ENCODE measurements at regions of chr21 and their contacts with region 1.

Region 1: GRCh38 chr21:32612075-32612998 is at the start of gene CFAP298:
- DNase-seq: peak; percentile 85
- ATAC-seq: peak; percentile 90
- H3K4me3 Mint-ChIP-seq: peak within 1 kb of the TSS; percentile 99
- H3K27ac Mint-ChIP-seq: peak within 1 kb of the TSS; percentile 90
- H3K4me1 Mint-ChIP-seq: peaks cover 10% of the 10 kb centered on the region
- H3K27me3 Mint-ChIP-seq: peaks cover 6% of the 10 kb centered on the region
- total RNA-seq, gene CFAP298: 33.8 to 36.2 TPM

Region 2: GRCh38 chr21:32392880-32393676 is 219.3 kb before region 1 on chr21 and contains the start of gene URB1:
- POLR2A ChIA-PET with region 1: interaction called, 10 read pairs
- DNase-seq: peak; percentile 99
- ATAC-seq: peak; percentile 91
- H3K4me3 Mint-ChIP-seq: peak within 1 kb of the TSS; percentile 89
- H3K27ac Mint-ChIP-seq: peak within 1 kb of the TSS; percentile 83
- H3K4me1 Mint-ChIP-seq: peaks cover 35% of the 10 kb centered on the region
- H3K27me3 Mint-ChIP-seq: peaks cover 3% of the 10 kb centered on the region
- total RNA-seq, gene URB1: 15.8 to 16.5 TPM

Region 3: DNA sequence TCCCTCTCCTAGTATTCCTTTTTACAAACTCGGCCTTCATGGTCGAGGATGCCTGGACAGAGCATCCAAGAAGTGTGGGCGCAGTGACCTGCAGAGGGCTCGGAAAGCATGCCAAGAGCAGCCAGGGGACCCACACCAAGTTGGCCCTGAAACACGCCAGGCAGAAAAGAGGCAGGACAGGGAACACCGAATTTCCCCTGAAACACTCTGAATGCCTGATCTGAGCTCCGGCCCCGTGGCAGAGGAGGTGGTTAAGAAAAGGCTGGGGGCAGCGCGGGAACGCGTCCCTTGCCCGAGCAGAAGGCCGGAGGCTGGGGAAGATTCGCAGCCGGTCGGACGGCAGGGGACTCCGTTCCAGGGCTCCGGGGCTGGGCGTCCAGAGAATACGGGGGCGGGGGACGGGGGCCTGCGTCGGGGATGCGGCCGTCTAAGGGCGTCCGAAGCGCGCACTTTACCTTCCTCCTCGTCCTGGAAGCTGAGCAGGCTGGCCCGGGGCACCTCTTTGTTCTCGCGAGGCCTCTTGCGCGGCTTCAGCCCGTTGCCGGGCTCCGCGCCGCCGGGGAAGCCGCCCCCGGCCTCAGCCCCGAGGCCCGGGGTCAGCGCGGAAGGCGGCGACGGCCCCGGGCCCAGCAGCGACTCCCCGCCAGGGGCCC is 158.7 kb after region 1 on chr21:
- POLR2A ChIA-PET with region 1: interaction called, 18 read pairs
- DNase-seq: no peak
- ATAC-seq: peak; percentile 48
- H3K4me3 Mint-ChIP-seq: peak overlapping the region; percentile 98
- H3K27ac Mint-ChIP-seq: peak overlapping the region; percentile 92
- H3K4me1 Mint-ChIP-seq: peaks cover 43% of the 10 kb centered on the region
- H3K27me3 Mint-ChIP-seq: no peaks in the 10 kb centered on the region

Region 4: GRCh38 chr21:33339918-33340317 is 727.6 kb after region 1 on chr21:
- POLR2A ChIA-PET with region 1: no interaction called
- DNase-seq: no peak
- ATAC-seq: no peak
- H3K4me3 Mint-ChIP-seq: no peak overlapping the region
- H3K27ac Mint-ChIP-seq: no peak overlapping the region
- H3K4me1 Mint-ChIP-seq: peaks cover 1% of the 10 kb centered on the region
- H3K27me3 Mint-ChIP-seq: no peaks in the 10 kb centered on the region